Endothelial cell of umbilical vein (primary cell): ENCODE measurements at regions of chr14 and their contacts with region 1.

Region 1: DNA sequence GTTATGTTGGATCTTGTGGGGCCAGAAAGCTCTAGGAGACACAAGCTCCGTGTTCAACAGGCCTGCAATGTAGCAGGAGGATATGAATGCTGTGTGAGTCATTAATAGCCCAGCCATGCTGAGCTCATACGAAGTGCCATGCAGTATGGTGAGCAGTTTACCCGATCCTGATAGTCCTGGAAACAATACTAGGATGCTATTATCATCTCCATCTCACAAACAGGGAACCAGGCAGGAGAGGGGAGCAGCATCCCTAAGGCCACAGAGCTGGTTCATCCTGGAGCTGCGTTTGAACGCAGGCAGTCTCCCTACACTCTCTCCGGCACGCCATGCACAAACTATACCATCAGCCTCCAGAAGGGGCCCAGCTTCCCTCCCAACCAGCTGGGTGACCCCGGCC is 20.5 kb downstream of the TTC7B start:
- DNase-seq: peak; percentile 92
- H3K4me3 ChIP-seq: no peak overlapping the region
- H3K27ac ChIP-seq: peak overlapping the region; percentile 88
- H3K4me1 ChIP-seq: peaks cover 30% of the 10 kb centered on the region
- H3K27me3 ChIP-seq: no peaks in the 10 kb centered on the region
- CTCF ChIP-seq: no peak
- POLR2A ChIP-seq: no peak

Region 2: DNA sequence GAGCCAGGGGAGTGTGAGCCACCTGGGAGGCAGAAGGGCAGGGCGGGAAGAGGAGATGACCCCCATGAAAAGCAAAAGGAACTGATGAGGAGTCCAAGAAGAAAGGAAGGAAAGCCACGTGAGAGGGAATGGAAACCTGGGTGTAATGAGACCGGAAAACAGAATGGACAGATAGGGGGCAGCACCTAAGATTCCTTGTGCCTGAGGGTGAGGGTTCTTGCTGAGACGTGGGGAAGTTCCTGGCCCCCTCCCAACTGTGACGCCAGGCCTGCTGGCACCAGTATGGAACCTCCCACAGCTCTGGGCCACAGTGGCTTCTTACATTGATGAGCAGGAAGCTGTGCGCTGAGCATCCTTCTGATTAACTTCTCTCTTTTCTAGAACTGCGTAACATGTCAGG is 10.3 kb before region 1 on chr14:
- CTCF ChIA-PET with region 1: interaction called, 21 read pairs
- POLR2A ChIA-PET with region 1: interaction called, 3 read pairs
- dilution Hi-C with region 1: no loop called
- intact Hi-C with region 1: loop called (anchors 1 kb)
- DNase-seq: peak; percentile 37
- H3K4me3 ChIP-seq: no peak overlapping the region
- H3K27ac ChIP-seq: no peak overlapping the region
- H3K4me1 ChIP-seq: no peaks in the 10 kb centered on the region
- H3K27me3 ChIP-seq: no peaks in the 10 kb centered on the region
- CTCF ChIP-seq: peak; percentile 21 to 34
- POLR2A ChIP-seq: no peak

Region 3: DNA sequence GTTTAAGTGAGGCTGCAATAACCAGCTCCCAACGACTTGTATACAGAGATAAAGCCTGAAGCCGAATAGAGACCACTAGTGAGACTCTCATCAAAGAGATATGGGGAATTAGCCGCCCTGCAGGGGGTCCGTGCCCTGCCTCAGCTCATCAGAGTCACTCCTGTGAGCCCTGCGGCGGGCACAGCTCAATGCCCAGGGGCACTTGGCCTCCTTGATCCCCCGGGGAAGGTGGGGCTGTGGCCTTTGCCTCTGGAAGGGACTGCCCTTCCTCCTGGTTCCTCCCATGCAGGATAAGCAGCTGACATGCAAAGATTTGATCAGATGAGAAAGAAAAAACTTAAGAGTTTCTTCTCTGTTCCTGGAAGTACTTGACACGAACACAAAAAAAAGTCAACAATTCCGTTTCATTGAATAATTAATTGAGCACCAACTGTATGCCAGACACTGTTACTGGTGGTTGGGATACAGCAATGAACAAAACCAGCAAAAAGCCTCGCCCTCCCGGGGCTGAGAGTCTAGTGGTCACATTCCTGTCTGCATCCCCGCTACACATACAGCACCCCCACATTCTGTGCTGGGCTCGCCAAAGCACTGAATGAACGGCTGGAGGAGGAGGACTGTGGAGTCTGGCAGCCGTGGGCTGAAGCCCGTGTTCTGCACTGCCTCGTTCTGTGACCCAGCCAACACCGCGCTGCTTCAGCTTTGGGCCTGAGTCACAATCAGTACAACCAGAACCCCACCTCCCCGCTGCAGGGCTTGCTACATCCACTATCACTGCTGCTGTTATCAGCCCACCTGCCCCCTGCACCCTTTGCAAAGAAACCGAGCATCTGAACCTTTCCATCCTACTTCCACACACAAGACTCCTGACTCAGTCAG is 10.2 kb after region 1 on chr14:
- CTCF ChIA-PET with region 1: interaction called, 13 read pairs
- POLR2A ChIA-PET with region 1: interaction called, 6 read pairs
- dilution Hi-C with region 1: no loop called
- intact Hi-C with region 1: loop called (anchors 1 kb)
- DNase-seq: no peak
- H3K4me3 ChIP-seq: no peak overlapping the region
- H3K27ac ChIP-seq: peak overlapping the region; percentile 17
- H3K4me1 ChIP-seq: peaks cover 52% of the 10 kb centered on the region
- H3K27me3 ChIP-seq: no peaks in the 10 kb centered on the region
- CTCF ChIP-seq: no peak
- POLR2A ChIP-seq: no peak

Region 4: GRCh38 chr14:90815822-90816700 is 20.3 kb after region 1 on chr14 and contains the start of gene TTC7B:
- CTCF ChIA-PET with region 1: interaction called, 23 read pairs
- POLR2A ChIA-PET with region 1: no interaction called
- dilution Hi-C with region 1: no loop called
- intact Hi-C with region 1: loop called (anchors 1 kb)
- DNase-seq: no peak
- H3K4me3 ChIP-seq: peak within 1 kb of the TSS; percentile 70 to 95 (median 94)
- H3K27ac ChIP-seq: peak within 1 kb of the TSS; percentile 41
- H3K4me1 ChIP-seq: peaks cover 9% of the 10 kb centered on the region
- H3K27me3 ChIP-seq: no peaks in the 10 kb centered on the region
- CTCF ChIP-seq: peak in 1 of 2 donors; percentile 47
- POLR2A ChIP-seq: no peak
- total RNA-seq, gene TTC7B: 76.5 and 86.4 TPM in 2 replicates

Region 5: DNA sequence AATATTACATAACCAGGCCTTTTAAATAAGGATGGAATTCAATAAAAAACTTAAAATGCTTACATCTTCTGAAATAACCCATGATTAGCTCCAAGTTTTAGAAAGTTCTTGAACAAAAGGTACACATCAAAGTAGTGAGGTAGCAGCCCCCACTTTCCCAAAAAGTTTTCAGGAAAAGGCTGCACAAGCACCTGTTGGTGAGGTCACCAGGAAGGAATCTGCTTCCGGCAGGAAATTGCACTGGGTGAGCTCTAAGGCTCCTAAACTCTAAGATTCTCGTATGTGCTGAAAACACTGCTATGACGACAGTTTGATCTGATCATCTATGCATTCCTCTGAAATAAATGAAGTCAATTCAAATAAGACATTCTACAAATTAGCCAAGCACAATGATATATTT is 54.7 kb after region 1 on chr14:
- CTCF ChIA-PET with region 1: interaction called, 3 read pairs
- POLR2A ChIA-PET with region 1: interaction called, 3 read pairs
- dilution Hi-C with region 1: no loop called
- intact Hi-C with region 1: loop called (anchors 2 kb)
- DNase-seq: peak; percentile 82
- H3K4me3 ChIP-seq: no peak overlapping the region
- H3K27ac ChIP-seq: peak overlapping the region; percentile 91
- H3K4me1 ChIP-seq: peaks cover 20% of the 10 kb centered on the region
- H3K27me3 ChIP-seq: no peaks in the 10 kb centered on the region
- CTCF ChIP-seq: no peak
- POLR2A ChIP-seq: no peak